ENCODE measurements at regions of chr17 and their contacts with region 1.

Region 1: GRCh38 chr17:28967221-28968140 is 16.2 kb upstream of the PHF12 start:
- DNase-seq: no peak
- ATAC-seq: no peak
- H3K4me3 Mint-ChIP-seq: no peak overlapping the region
- H3K27ac Mint-ChIP-seq: 0 out of 2 replicates have a peak overlapping the region, but pooled peaks have one; percentile 14
- H3K4me1 Mint-ChIP-seq: peaks cover 43% of the 10 kb centered on the region
- H3K27me3 Mint-ChIP-seq: no peaks in the 10 kb centered on the region; the same call in 1 of the 2 replicates
- CTCF ChIP-seq: no peak

Region 2: GRCh38 chr17:28887871-28888471 is 79.5 kb before region 1 on chr17:
- CTCF ChIA-PET with region 1: no interaction called
- POLR2A ChIA-PET with region 1: no interaction called
- DNase-seq: no peak
- ATAC-seq: no peak
- H3K4me3 Mint-ChIP-seq: no peak overlapping the region
- H3K27ac Mint-ChIP-seq: no peak overlapping the region
- H3K4me1 Mint-ChIP-seq: peaks cover 7% of the 10 kb centered on the region
- H3K27me3 Mint-ChIP-seq: no peaks in the 10 kb centered on the region
- CTCF ChIP-seq: no peak

Region 3: GRCh38 chr17:29019475-29020181 is 52.1 kb after region 1 on chr17:
- CTCF ChIA-PET with region 1: interaction called, 23 read pairs
- POLR2A ChIA-PET with region 1: interaction called, 3 read pairs
- DNase-seq: peak; percentile 72
- ATAC-seq: peak; percentile 72
- H3K4me3 Mint-ChIP-seq: peak overlapping the region; percentile 62
- H3K27ac Mint-ChIP-seq: peak overlapping the region; percentile 69; the same call in 1 of the 2 replicates
- H3K4me1 Mint-ChIP-seq: peaks cover 67% of the 10 kb centered on the region
- H3K27me3 Mint-ChIP-seq: peaks cover 29% of the 10 kb centered on the region
- CTCF ChIP-seq: no peak

Region 4: DNA sequence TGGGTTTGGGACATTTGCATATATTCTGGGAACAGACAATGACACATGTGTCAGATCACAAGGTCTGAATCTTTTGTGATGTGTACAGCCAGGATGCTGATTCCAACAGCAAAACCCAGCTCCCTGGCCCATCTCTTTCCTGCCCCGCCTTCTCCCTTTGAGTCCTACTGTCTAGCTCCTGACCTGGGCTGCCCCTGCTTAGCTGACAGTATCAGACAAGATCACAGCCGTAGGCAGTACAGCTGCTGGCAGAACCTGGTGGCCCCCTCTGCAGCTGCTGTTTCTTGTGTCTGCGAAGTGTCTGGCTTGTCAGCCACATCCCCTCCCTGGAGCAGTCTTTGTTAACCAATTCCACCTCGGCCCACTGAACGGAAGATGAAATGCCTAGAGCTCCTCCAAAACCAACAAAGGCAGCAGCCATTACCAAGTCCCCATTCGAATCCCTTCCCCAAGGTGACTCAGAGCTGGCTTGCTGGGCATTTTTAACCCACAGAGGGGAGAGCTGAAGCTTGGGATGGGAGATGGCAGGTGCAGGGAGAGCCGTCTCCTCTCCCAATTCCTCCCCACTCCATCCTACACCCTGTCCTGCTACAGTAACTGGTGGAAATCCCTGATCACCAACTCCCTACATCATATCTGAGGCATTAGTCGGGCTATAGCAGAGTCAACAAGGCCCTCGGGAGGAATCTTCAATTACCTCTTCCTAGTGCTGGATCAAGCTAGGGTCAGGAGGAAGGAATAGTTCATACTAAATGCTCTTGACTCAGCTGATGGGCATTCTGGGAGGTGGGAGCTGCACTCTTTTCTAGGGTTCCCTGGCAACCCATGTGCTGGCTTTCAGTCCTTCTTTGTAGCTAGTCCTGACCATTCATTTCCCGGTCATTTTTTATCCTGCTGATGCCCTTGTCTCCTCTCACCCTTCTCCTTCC is 81.2 kb after region 1 on chr17:
- CTCF ChIA-PET with region 1: interaction called, 19 read pairs
- POLR2A ChIA-PET with region 1: interaction called, 4 read pairs
- DNase-seq: no peak
- ATAC-seq: peak; percentile 58
- H3K4me3 Mint-ChIP-seq: no peak overlapping the region
- H3K27ac Mint-ChIP-seq: 0 out of 2 replicates have a peak overlapping the region, but pooled peaks have one; percentile 5
- H3K4me1 Mint-ChIP-seq: peaks cover 51% of the 10 kb centered on the region
- H3K27me3 Mint-ChIP-seq: no peaks in the 10 kb centered on the region
- CTCF ChIP-seq: no peak

Region 5: GRCh38 chr17:29078183-29079045 is 110.9 kb after region 1 on chr17:
- CTCF ChIA-PET with region 1: interaction called, 14 read pairs
- POLR2A ChIA-PET with region 1: no interaction called
- DNase-seq: no peak
- ATAC-seq: no peak
- H3K4me3 Mint-ChIP-seq: no peak overlapping the region
- H3K27ac Mint-ChIP-seq: no peak overlapping the region
- H3K4me1 Mint-ChIP-seq: peaks cover 30% of the 10 kb centered on the region
- H3K27me3 Mint-ChIP-seq: no peaks in the 10 kb centered on the region
- CTCF ChIP-seq: no peak

Region 6: GRCh38 chr17:29111816-29112499 is 144.5 kb after region 1 on chr17:
- CTCF ChIA-PET with region 1: interaction called, 762 read pairs
- POLR2A ChIA-PET with region 1: interaction called, 4 read pairs
- DNase-seq: peak; percentile 83
- ATAC-seq: peak; percentile 45
- H3K4me3 Mint-ChIP-seq: no peak overlapping the region
- H3K27ac Mint-ChIP-seq: no peak overlapping the region
- H3K4me1 Mint-ChIP-seq: peaks cover 27% of the 10 kb centered on the region
- H3K27me3 Mint-ChIP-seq: no peaks in the 10 kb centered on the region
- CTCF ChIP-seq: peak; percentile 72